Stomach (tissue), 19 donors: ENCODE measurements at regions of chr1 and their contacts with region 1.

Region 1: GRCh38 chr1:231211005-231211857 is 29.8 kb upstream of the GNPAT start:
- DNase-seq: peak; percentile 91 to 94
- H3K4me3 ChIP-seq: peak overlapping the region; percentile 44 to 48 (median 46)
- H3K27ac ChIP-seq: peak overlapping the region; percentile 15 to 74 (median 53)
- H3K4me1 ChIP-seq: peaks cover 0 to 18% (median 9%) of the 10 kb centered on the region in 4 donors
- H3K27me3 ChIP-seq: no peaks in the 10 kb centered on the region
- CTCF ChIP-seq: peak in 6 of 7 experiments; percentile 12 to 91 (median 89)
- EP300 ChIP-seq: no peak
- POLR2A ChIP-seq: no peak

Region 2: GRCh38 chr1:230807029-230807428 is 404.2 kb before region 1 on chr1:
- intact Hi-C with region 1: loop called (anchors 10 kb)
- DNase-seq: peak in 1 of 2 donors; percentile 64
- H3K4me3 ChIP-seq: no peak overlapping the region
- H3K27ac ChIP-seq: peak overlapping the region in 2 of 5 donors; percentile 17 to 66
- H3K4me1 ChIP-seq: peaks cover 0 to 8% (median 0%) of the 10 kb centered on the region in 4 donors
- H3K27me3 ChIP-seq: no peaks in the 10 kb centered on the region
- CTCF ChIP-seq: no peak
- EP300 ChIP-seq: no peak
- POLR2A ChIP-seq: no peak

Region 3: GRCh38 chr1:230917284-230918135 is 293.7 kb before region 1 on chr1:
- intact Hi-C with region 1: loop called (anchors 5 kb)
- DNase-seq: peak; percentile 92 to 93
- H3K4me3 ChIP-seq: no peak overlapping the region
- H3K27ac ChIP-seq: no peak overlapping the region
- H3K4me1 ChIP-seq: peaks cover 0 to 7% (median 0%) of the 10 kb centered on the region in 4 donors
- H3K27me3 ChIP-seq: no peaks in the 10 kb centered on the region
- CTCF ChIP-seq: peak in 5 of 7 experiments; percentile 19 to 68 (median 60)
- EP300 ChIP-seq: no peak
- POLR2A ChIP-seq: no peak